ENCODE measurements at regions of chr1 and their contacts with region 1.

Region 1: DNA sequence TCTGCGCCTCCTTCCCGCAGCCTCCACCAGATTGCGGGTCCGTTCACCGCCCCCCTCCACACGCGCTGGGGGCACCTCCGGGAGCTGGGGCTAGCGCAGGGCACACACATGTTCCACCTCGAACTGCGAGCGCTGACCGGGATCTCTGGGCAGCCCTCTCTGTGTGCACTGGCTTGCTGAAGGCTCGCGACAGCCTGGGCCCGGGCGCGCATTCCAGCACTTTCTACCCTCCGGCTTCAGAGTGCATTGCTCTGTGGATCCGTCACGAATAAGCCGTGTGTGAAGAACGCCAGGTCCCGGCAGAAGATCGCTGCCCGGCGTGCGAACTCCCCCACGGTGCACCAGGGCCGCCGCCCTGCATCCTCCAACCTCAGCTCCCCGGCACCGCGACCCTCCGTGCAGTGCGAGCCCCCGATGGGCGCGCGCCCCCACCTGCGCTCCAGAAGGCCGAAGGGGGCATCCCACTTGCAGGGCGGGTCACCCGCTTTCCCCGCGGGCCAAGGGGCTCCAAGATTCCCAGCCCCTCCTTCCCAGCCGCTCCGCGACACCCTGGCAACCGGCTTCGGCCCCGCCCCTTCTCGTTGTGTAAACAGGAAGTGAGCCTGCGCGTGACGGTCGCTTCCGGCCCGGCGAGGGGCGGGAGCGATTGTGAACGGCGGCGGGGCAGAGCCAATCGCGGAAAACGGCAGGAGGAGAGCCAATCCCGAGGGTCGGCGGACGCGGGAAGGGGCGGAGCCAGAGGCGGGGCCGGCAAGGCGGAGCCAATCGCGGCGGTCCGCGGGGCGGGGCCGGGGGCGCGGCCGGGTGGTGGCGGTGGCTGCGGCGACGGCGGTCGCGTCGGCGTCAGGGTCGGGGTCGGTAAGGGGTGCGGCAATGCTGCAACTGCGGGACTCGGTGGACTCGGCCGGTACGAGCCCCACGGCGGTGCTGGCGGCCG is at the start of gene TPRG1L:
- DNase-seq: peak; percentile 99 to 100 (median 100)
- ATAC-seq: peak; percentile 96
- H3K4me3 ChIP-seq: peak within 1 kb of the TSS; percentile 95
- H3K27ac ChIP-seq: peak within 1 kb of the TSS; percentile 44; the same call in 2 of the 3 replicates
- H3K4me1 ChIP-seq: peaks cover 10 to 25% of the 10 kb centered on the region in 2 experiments; a peak in 4 of 5 replicates
- H3K27me3 ChIP-seq: peaks cover 5 to 23% of the 10 kb centered on the region in 2 experiments; a peak in 4 of 5 replicates
- CTCF ChIP-seq: 0 out of 6 replicates have a peak, but pooled peaks of 1 of the 3 experiments have one; percentile 0
- EP300 ChIP-seq: no peak; the same call in 1 of the 2 replicates
- POLR2A ChIP-seq: no peak
- RAD21 ChIP-seq: no peak
- polyA plus RNA-seq, gene TPRG1L: 1.6 to 1.9 TPM

Region 2: DNA sequence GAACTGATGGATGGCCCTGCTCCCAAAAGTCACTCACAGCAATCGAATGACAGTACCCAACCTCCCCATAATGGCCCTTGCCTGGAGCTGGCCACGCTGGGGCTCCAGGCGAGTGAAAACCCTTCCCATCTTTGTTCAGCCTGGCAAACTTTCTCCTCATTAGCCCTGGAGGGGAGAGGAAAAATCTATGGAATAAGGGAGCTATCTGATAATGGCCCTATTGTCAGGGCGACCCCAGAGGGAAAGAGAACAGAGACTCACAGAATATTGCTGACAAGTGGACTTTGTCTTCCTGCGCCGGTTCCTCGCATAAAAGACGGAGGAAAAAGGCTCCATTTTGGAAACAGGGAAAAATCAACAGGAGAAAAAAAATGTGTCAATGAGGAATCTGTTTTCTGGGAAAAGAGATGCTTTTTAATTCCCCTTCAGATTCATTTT is 183.0 kb before region 1 on chr1:
- CTCF ChIA-PET with region 1: no interaction called
- POLR2A ChIA-PET with region 1: no interaction called
- in situ Hi-C with region 1: loop called (anchors 5 kb)
- intact Hi-C with region 1: no loop called
- DNase-seq: no peak
- ATAC-seq: no peak
- H3K4me3 ChIP-seq: no peak overlapping the region
- H3K27ac ChIP-seq: no peak overlapping the region
- H3K4me1 ChIP-seq: peaks cover 0 to 6% of the 10 kb centered on the region in 2 experiments; a peak in 1 of 5 replicates
- H3K27me3 ChIP-seq: peaks cover 30 to 65% of the 10 kb centered on the region in 2 experiments; a peak in 4 of 5 replicates
- CTCF ChIP-seq: no peak
- EP300 ChIP-seq: no peak
- POLR2A ChIP-seq: no peak
- RAD21 ChIP-seq: no peak

Region 3: GRCh38 chr1:3721955-3722465 is 97.5 kb after region 1 on chr1:
- CTCF ChIA-PET with region 1: interaction called, 4 read pairs
- POLR2A ChIA-PET with region 1: no interaction called
- in situ Hi-C with region 1: no loop called
- intact Hi-C with region 1: loop called (anchors 5 kb)
- DNase-seq: no peak
- ATAC-seq: no peak
- H3K4me3 ChIP-seq: no peak overlapping the region
- H3K27ac ChIP-seq: no peak overlapping the region
- H3K4me1 ChIP-seq: peaks cover 0 to 54% of the 10 kb centered on the region in 2 experiments; a peak in 3 of 5 replicates
- H3K27me3 ChIP-seq: peaks cover 15 to 53% of the 10 kb centered on the region in 2 experiments; a peak in 3 of 5 replicates
- CTCF ChIP-seq: no peak
- EP300 ChIP-seq: no peak
- POLR2A ChIP-seq: no peak
- RAD21 ChIP-seq: no peak

Measured in K562 (cell line).